Activated CD4-positive, alpha-beta T cell treated with anti-CD3 and anti-CD28 coated beads, Interleukin-2, amount 10 ng/mL, durations not matched to agents 7 days and 5 days (primary cell): ENCODE measurements at regions of chrX and their contacts with region 1.

Region 1: DNA sequence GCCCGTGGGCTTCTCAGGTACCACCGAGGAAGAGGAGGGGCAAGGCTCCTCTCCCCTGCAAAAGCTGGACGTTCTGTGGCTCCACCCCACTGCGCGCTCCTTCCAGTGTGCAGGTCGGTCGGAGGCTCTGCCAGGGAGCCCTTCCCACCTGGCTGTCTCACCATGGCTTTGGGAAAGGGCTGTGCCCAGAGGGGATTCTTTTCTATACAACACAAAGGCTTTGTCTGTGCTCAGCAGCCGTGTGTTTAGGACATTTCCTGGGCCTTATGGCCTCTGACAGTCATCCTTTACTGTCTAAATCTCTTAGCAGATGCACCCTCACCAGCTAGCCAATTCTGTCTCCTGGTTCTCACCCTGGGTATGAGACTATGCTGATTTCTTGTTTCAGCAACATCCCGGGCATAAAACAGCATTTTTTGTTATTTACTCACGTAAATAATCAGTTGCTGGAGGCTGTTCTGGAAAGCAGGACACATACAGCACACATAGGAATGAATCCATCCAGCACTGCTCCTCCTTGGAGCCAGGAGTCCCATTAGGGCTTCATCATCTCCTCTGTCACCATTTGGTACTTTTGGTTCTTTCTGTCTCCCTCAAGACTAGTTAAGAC is 20.4 kb upstream of the ATXN3L start:
- DNase-seq: no peak
- H3K4me3 Mint-ChIP-seq: no peak overlapping the region
- H3K27ac Mint-ChIP-seq: no peak overlapping the region
- H3K4me1 Mint-ChIP-seq: no peaks in the 10 kb centered on the region
- H3K27me3 Mint-ChIP-seq: no peaks in the 10 kb centered on the region

Region 2: GRCh38 chrX:13305108-13305507 is 35.2 kb before region 1 on chrX:
- CTCF ChIA-PET with region 1: no interaction called
- POLR2A ChIA-PET with region 1: no interaction called
- DNase-seq: no peak
- H3K4me3 Mint-ChIP-seq: no peak overlapping the region
- H3K27ac Mint-ChIP-seq: no peak overlapping the region
- H3K4me1 Mint-ChIP-seq: peaks cover 8% of the 10 kb centered on the region
- H3K27me3 Mint-ChIP-seq: no peaks in the 10 kb centered on the region

Region 3: DNA sequence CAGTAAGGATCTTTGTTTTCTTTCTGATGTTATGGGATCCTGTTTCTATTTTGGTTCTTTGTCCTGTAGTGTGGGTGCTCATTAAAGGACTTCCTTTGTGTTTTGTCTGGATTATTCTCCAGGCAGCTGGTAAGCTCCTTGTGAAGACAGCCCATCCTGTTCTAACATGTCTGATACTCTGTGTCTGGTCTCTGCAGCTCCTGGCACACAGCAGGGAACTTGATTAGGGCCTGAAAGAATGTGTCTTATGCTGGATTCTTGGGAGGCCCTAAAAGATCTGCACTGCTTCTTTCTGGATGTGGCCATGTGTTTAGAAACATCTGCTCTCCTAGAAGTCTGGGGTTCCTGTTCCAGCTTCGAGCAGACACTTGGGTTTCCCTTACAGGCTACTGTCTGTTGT is 17.6 kb after region 1 on chrX:
- CTCF ChIA-PET with region 1: interaction called, 11 read pairs
- POLR2A ChIA-PET with region 1: no interaction called
- DNase-seq: no peak
- H3K4me3 Mint-ChIP-seq: no peak overlapping the region
- H3K27ac Mint-ChIP-seq: no peak overlapping the region
- H3K4me1 Mint-ChIP-seq: no peaks in the 10 kb centered on the region
- H3K27me3 Mint-ChIP-seq: no peaks in the 10 kb centered on the region